ENCODE measurements at regions of chr2 and their contacts with region 1.

Region 1: DNA sequence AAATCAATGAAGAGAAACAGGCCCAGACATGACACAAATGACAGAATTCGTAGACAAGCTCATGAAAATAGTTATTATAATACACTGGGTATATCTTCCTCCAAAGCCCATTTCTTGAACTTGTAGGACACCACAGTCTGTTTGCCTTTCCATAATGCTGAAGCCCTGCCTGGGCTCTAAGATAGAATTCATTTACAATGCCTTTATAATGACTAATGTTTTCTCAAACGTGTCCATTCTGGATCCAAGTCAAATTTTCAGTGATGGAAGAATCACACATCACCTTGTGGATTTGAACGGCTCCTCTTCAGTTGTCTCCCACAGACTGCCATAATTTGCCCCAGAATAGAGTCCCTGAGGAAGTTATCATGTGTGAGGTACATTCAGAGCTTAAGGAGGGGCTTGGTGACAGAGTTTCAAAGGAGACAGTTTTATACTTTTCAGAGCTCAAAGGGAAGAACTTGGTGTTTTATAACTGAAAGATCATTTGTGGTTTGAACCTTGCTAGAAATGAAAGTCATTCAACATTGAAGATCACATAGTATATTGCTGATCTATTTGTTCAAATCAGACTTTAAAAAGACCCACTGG is 38.2 kb downstream of the CASP8 start:
- DNase-seq: peak; percentile 38
- ATAC-seq: peak; percentile 67
- H3K4me3 ChIP-seq: no peak overlapping the region
- H3K27ac ChIP-seq: no peak overlapping the region
- H3K4me1 ChIP-seq: no peaks in the 10 kb centered on the region
- H3K27me3 ChIP-seq: no peaks in the 10 kb centered on the region
- CTCF ChIP-seq: no peak

Region 2: GRCh38 chr2:201180010-201180409 is 118.5 kb before region 1 on chr2:
- CTCF ChIA-PET with region 1: no interaction called
- POLR2A ChIA-PET with region 1: no interaction called
- intact Hi-C with region 1: no loop called
- DNase-seq: no peak
- ATAC-seq: no peak
- H3K4me3 ChIP-seq: no peak overlapping the region
- H3K27ac ChIP-seq: no peak overlapping the region
- H3K4me1 ChIP-seq: no peaks in the 10 kb centered on the region
- H3K27me3 ChIP-seq: no peaks in the 10 kb centered on the region
- CTCF ChIP-seq: no peak

Region 3: GRCh38 chr2:201357241-201357640 is 58.7 kb after region 1 on chr2 and contains the start of gene FLACC1:
- CTCF ChIA-PET with region 1: no interaction called
- POLR2A ChIA-PET with region 1: no interaction called
- intact Hi-C with region 1: loop called (anchors 5 kb)
- DNase-seq: peak; percentile 45
- ATAC-seq: no peak
- H3K4me3 ChIP-seq: no peak within 1 kb of the TSS
- H3K27ac ChIP-seq: no peak within 1 kb of the TSS
- H3K4me1 ChIP-seq: peaks cover 13% of the 10 kb centered on the region
- H3K27me3 ChIP-seq: no peaks in the 10 kb centered on the region
- CTCF ChIP-seq: no peak
- total RNA-seq, gene FLACC1: 0.26 and 5.9 TPM in 2 replicates

Region 4: GRCh38 chr2:201425952-201426351 is 127.4 kb after region 1 on chr2:
- CTCF ChIA-PET with region 1: no interaction called
- POLR2A ChIA-PET with region 1: no interaction called
- intact Hi-C with region 1: no loop called
- DNase-seq: no peak
- ATAC-seq: no peak
- H3K4me3 ChIP-seq: no peak overlapping the region
- H3K27ac ChIP-seq: no peak overlapping the region
- H3K4me1 ChIP-seq: no peaks in the 10 kb centered on the region
- H3K27me3 ChIP-seq: no peaks in the 10 kb centered on the region
- CTCF ChIP-seq: no peak

Measured in PC-3 (cell line).